ENCODE measurements at regions of chr1 and their contacts with region 1.

Region 1: GRCh38 chr1:44571712-44572571 is 102.3 kb downstream of the TMEM53 start:
- DNase-seq: peak; percentile 42
- H3K4me3 Mint-ChIP-seq: no peak overlapping the region
- H3K27ac Mint-ChIP-seq: no peak overlapping the region
- H3K4me1 Mint-ChIP-seq: no peaks in the 10 kb centered on the region
- H3K27me3 Mint-ChIP-seq: peaks cover 17% of the 10 kb centered on the region

Region 2: GRCh38 chr1:44557778-44558177 is 14.2 kb before region 1 on chr1:
- CTCF ChIA-PET with region 1: interaction called, 11 read pairs
- POLR2A ChIA-PET with region 1: no interaction called
- DNase-seq: no peak
- H3K4me3 Mint-ChIP-seq: no peak overlapping the region
- H3K27ac Mint-ChIP-seq: no peak overlapping the region
- H3K4me1 Mint-ChIP-seq: peaks cover 11% of the 10 kb centered on the region
- H3K27me3 Mint-ChIP-seq: peaks cover 2% of the 10 kb centered on the region

Region 3: DNA sequence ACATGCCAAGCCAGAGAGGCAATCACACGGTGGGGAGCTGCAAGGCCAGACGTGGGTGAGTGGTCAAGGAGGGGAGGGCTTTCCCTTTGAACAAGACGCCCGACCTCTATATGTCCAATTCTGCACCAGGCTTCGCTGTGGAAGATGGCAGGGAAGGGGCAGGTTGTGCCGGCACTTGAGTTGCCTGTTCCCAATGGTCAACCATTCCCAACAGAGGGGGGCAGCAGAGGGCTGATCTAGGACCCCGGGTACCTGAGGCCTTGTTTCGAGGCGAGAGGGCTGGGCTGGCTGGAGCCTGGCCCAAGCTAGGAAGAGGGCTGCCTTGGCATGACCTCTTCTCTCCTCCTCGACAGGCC is 37.4 kb after region 1 on chr1:
- CTCF ChIA-PET with region 1: no interaction called
- POLR2A ChIA-PET with region 1: no interaction called
- DNase-seq: peak; percentile 27
- H3K4me3 Mint-ChIP-seq: no peak overlapping the region
- H3K27ac Mint-ChIP-seq: no peak overlapping the region
- H3K4me1 Mint-ChIP-seq: no peaks in the 10 kb centered on the region
- H3K27me3 Mint-ChIP-seq: no peaks in the 10 kb centered on the region

Region 4: DNA sequence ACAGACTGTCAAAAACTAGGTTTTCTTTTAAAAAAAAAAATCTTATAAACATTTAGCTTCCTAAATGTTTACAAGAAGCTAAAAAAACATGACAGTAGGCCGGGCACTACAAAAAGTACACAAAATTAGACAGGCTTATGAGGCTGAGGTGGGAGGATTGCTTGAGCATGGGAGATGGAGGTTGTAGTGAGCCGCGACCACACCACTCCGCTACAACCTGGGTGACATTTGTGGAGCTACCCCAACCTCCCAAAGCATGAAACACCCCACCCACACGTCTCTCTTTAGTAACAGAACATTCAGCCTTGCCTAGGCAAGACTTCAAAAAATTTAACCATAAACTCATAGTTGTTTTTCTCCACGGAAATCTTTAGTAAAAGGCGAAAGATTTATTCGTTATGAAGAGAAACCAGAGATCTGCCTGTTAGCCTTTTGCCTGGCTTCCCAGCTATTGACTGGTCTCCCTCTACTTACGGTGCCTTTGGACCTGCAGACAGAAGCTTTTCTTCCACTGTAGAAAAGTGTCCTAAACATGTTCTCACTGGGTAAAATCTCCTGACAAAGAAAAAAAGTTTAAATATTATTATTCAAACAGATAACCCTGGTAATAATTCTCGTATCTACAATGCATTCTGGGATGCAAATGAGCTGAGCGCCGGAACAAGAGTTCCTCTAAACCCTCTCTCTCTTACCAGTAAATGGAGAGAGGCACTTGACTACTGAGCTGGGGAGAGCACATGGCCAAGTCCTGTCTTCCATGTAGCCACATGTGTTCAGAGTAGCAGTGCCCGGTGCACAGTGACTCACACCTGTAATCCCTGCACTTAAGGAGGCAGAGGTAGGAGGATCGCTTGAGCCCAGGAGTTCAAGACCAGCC is 149.8 kb after region 1 on chr1:
- CTCF ChIA-PET with region 1: no interaction called
- POLR2A ChIA-PET with region 1: no interaction called
- DNase-seq: peak; percentile 85
- H3K4me3 Mint-ChIP-seq: peak overlapping the region; percentile 43
- H3K27ac Mint-ChIP-seq: peak overlapping the region; percentile 97
- H3K4me1 Mint-ChIP-seq: peaks cover 72% of the 10 kb centered on the region
- H3K27me3 Mint-ChIP-seq: no peaks in the 10 kb centered on the region

Region 5: GRCh38 chr1:45134468-45134873 is 562.5 kb after region 1 on chr1:
- CTCF ChIA-PET with region 1: no interaction called
- POLR2A ChIA-PET with region 1: no interaction called
- DNase-seq: no peak
- H3K4me3 Mint-ChIP-seq: no peak overlapping the region
- H3K27ac Mint-ChIP-seq: no peak overlapping the region
- H3K4me1 Mint-ChIP-seq: no peaks in the 10 kb centered on the region
- H3K27me3 Mint-ChIP-seq: peaks cover 3% of the 10 kb centered on the region